Spleen (tissue), 13 donors: ENCODE measurements at regions of chr5 and their contacts with region 1.

Region 1: GRCh38 chr5:147822686-147823491 is 8.6 kb downstream of the SPINK1 start:
- DNase-seq: no peak
- H3K4me3 ChIP-seq: no peak overlapping the region
- H3K27ac ChIP-seq: no peak overlapping the region
- H3K4me1 ChIP-seq: no peaks in the 10 kb centered on the region
- H3K27me3 ChIP-seq: peaks cover 0 to 7% (median 0%) of the 10 kb centered on the region in 7 donors
- CTCF ChIP-seq: peak; percentile 13 to 80 (median 57)
- POLR2A ChIP-seq: no peak

Region 2: DNA sequence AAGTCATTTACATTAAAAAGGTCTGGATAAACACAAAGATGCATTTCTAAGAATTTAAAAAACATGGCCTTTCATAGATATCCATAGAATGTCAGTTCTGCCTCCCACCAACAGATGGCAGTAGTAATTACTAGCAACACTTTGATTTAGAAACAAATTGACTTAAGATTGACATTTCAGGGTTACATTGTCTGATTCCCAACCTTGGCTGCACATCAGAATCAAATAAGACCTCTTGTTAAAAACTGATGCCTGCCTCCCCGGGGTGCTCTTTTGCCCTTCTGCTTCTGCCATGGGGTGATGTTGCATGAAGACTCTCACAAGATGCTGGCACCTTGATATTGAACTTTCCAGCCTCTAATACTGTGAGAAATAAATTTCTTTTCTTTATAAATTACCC is 1160.7 kb before region 1 on chr5:
- intact Hi-C with region 1: no loop called
- DNase-seq: no peak
- H3K4me3 ChIP-seq: no peak overlapping the region
- H3K27ac ChIP-seq: no peak overlapping the region
- H3K4me1 ChIP-seq: no peaks in the 10 kb centered on the region
- H3K27me3 ChIP-seq: no peaks in the 10 kb centered on the region
- CTCF ChIP-seq: peak in 9 of 11 experiments; percentile 19 to 68 (median 51)
- POLR2A ChIP-seq: no peak

Region 3: DNA sequence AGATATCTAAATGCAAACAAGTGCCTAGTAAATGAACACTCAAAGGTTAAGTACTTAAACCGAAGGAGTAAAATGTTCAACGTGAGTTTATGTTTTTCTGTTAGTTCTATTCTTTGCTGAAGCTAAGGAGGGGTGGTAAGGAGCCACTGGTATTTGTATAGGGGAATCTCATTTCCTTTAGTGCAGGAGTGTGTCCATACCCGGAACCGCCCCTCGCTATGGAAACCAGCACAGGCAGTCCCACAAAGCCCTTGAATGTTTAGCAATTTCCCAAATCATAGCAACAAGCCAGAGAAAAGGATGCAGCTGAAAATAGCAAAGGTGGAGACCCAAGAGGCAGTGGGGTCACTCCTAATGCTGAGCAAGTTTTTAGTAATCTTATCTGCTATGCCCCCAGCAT is 666.9 kb before region 1 on chr5:
- intact Hi-C with region 1: no loop called
- DNase-seq: no peak
- H3K4me3 ChIP-seq: no peak overlapping the region
- H3K27ac ChIP-seq: no peak overlapping the region
- H3K4me1 ChIP-seq: no peaks in the 10 kb centered on the region
- H3K27me3 ChIP-seq: no peaks in the 10 kb centered on the region
- CTCF ChIP-seq: no peak
- POLR2A ChIP-seq: no peak

Region 4: DNA sequence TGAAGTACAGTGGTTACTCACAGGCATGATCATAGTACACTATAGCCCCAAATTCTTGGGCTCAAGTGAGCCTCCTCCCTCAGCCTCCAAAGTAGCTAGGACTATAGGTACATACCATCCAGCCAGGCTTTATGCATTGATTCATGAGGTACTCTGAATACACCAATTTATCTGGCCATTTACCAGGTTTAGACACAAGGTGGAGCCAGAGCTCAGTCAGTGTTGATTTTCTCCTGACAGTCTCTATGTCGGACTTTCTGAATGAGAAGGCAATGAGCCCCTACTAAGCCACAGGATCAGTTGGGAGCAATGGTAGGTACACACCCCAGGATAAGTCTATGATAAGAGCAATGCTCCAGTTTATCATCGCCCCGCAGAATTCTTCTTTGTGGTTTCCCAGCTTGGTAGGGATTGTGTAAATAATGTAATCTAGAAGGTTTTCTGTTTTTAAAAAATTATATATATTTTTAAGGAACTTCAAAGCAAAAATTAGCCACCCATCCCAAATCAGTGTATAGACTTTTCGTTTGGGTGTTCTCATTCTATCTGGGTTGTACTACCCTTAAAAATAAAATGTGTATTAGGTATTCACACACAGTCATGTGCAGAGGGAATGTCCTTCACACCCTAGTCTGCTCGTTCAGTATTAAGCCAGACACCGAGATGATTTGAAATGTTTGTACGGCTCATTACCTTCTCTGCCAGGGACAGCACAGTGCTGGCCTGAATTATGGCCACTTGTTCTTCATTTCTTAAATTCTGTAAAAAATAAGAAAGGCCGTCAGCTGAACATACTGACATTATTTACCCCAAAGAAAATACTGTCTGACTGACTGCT is 194.6 kb before region 1 on chr5:
- intact Hi-C with region 1: loop called (anchors 5 kb)
- DNase-seq: no peak
- H3K4me3 ChIP-seq: no peak overlapping the region
- H3K27ac ChIP-seq: no peak overlapping the region
- H3K4me1 ChIP-seq: no peaks in the 10 kb centered on the region
- H3K27me3 ChIP-seq: no peaks in the 10 kb centered on the region
- CTCF ChIP-seq: peak; percentile 26 to 71 (median 58)
- POLR2A ChIP-seq: no peak

Region 5: DNA sequence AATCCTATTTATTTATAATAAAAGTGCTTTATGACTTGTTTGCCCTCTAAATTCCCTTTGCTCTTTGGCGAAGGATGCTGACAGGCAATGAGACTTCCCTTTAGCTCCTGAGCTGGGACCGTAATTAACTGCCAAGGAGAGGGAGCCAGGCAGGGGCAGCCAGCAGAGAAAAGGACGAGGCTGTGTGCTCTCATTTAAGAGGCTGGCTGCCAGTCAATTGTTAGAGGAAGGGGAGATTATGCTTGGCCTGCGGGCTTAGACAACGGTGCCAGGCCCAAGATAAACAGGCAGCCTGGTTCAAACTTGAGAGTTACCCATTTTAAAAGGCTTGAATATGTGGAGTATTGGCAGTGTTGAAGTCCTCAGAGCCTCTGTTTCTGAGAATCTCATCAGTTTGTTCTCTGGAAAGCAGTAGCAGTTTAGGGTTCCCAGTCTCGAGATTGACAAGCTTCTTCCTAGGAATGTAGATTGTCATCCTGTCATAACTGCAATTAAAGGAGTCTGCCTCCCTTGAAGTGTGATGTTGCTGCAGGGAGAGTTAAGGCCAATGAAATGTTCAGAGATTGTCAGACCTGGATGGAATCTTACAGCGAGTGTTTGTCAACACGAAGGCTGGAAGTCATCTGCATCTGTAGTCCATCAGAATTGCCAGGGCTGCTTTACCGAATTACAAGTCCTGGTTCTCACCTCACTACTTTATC is 153.6 kb before region 1 on chr5:
- intact Hi-C with region 1: no loop called
- DNase-seq: no peak
- H3K4me3 ChIP-seq: no peak overlapping the region
- H3K27ac ChIP-seq: no peak overlapping the region
- H3K4me1 ChIP-seq: no peaks in the 10 kb centered on the region
- H3K27me3 ChIP-seq: no peaks in the 10 kb centered on the region
- CTCF ChIP-seq: no peak
- POLR2A ChIP-seq: no peak

Region 6: GRCh38 chr5:147963948-147964693 is 141.2 kb after region 1 on chr5:
- intact Hi-C with region 1: no loop called
- DNase-seq: no peak
- H3K4me3 ChIP-seq: no peak overlapping the region
- H3K27ac ChIP-seq: no peak overlapping the region
- H3K4me1 ChIP-seq: peaks cover 0 to 6% (median 0%) of the 10 kb centered on the region in 6 donors
- H3K27me3 ChIP-seq: no peaks in the 10 kb centered on the region
- CTCF ChIP-seq: no peak
- POLR2A ChIP-seq: no peak